Activated T-helper 1 cell treated with anti-CD3 and anti-CD28 coated beads, Interleukin-12 subunit alpha, Interleukin-12 subunit beta, Interleukin-2, Interleukin-4 antibody, amounts not matched to agents 30 ng/mL and 10 ng/mL and 1 ng/mL, durations not matched to agents 14 hours and 24 hours and 36 hours (primary cell): ENCODE measurements at regions of chr17 and their contacts with region 1.

Region 1: GRCh38 chr17:42365136-42365535 is 23.1 kb downstream of the STAT3 start:
- DNase-seq: no peak
- H3K4me3 Mint-ChIP-seq: peak overlapping the region; percentile 57
- H3K27ac Mint-ChIP-seq: peak overlapping the region; percentile 87
- H3K4me1 Mint-ChIP-seq: peaks cover 73% of the 10 kb centered on the region
- H3K27me3 Mint-ChIP-seq: no peaks in the 10 kb centered on the region

Region 2: GRCh38 chr17:42337442-42337841 is 27.7 kb before region 1 on chr17:
- intact Hi-C with region 1: loop called (anchors 1 kb)
- DNase-seq: peak; percentile 82
- H3K4me3 Mint-ChIP-seq: peak overlapping the region; percentile 79
- H3K27ac Mint-ChIP-seq: peak overlapping the region; percentile 97
- H3K4me1 Mint-ChIP-seq: peaks cover 76% of the 10 kb centered on the region
- H3K27me3 Mint-ChIP-seq: no peaks in the 10 kb centered on the region

Region 3: GRCh38 chr17:42378597-42379594 is 13.8 kb after region 1 on chr17:
- intact Hi-C with region 1: loop called (anchors 1 kb)
- DNase-seq: no peak
- H3K4me3 Mint-ChIP-seq: peak overlapping the region; percentile 78
- H3K27ac Mint-ChIP-seq: peak overlapping the region; percentile 85
- H3K4me1 Mint-ChIP-seq: peaks cover 67% of the 10 kb centered on the region
- H3K27me3 Mint-ChIP-seq: no peaks in the 10 kb centered on the region

Region 4: GRCh38 chr17:42459256-42459800 is 94.2 kb after region 1 on chr17:
- intact Hi-C with region 1: no loop called
- DNase-seq: peak; percentile 5
- H3K4me3 Mint-ChIP-seq: peak overlapping the region; percentile 91
- H3K27ac Mint-ChIP-seq: peak overlapping the region; percentile 93
- H3K4me1 Mint-ChIP-seq: peaks cover 44% of the 10 kb centered on the region
- H3K27me3 Mint-ChIP-seq: peaks cover 10% of the 10 kb centered on the region